A673 (cell line): ENCODE measurements at regions of chr7 and their contacts with region 1.

Region 1: GRCh38 chr7:112058686-112059085 is 147.5 kb downstream of the DOCK4 start:
- DNase-seq: no peak
- H3K4me3 ChIP-seq: no peak overlapping the region
- H3K27ac ChIP-seq: no peak overlapping the region
- H3K4me1 ChIP-seq: peaks cover 4% of the 10 kb centered on the region
- H3K27me3 ChIP-seq: no peaks in the 10 kb centered on the region
- CTCF ChIP-seq: no peak

Region 2: GRCh38 chr7:112036071-112036470 is 22.6 kb before region 1 on chr7:
- CTCF ChIA-PET with region 1: no interaction called
- POLR2A ChIA-PET with region 1: interaction called, 18 read pairs
- intact Hi-C with region 1: no loop called
- DNase-seq: no peak
- H3K4me3 ChIP-seq: no peak overlapping the region
- H3K27ac ChIP-seq: no peak overlapping the region
- H3K4me1 ChIP-seq: peaks cover 5% of the 10 kb centered on the region
- H3K27me3 ChIP-seq: no peaks in the 10 kb centered on the region
- CTCF ChIP-seq: no peak

Region 3: DNA sequence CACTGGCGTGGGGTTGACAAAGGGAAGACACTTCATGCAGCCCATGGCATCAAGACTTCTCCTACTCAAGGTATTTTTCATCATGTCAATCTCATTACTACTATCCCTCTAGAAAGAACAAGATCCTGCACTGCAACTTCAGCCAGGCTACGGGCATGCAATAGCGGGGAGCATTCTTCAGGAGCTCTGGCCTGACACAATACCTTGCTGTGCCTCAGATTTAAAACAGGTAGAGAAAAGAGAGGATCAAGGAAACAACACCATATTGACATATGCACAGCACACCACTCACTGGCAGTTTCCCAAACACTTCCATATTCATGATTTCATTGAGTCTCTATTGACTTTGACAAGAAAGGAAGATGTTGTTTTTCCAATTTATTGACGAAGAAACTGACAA is 96.0 kb after region 1 on chr7:
- CTCF ChIA-PET with region 1: no interaction called
- POLR2A ChIA-PET with region 1: no interaction called
- intact Hi-C with region 1: no loop called
- DNase-seq: no peak
- H3K4me3 ChIP-seq: no peak overlapping the region
- H3K27ac ChIP-seq: no peak overlapping the region
- H3K4me1 ChIP-seq: peaks cover 7% of the 10 kb centered on the region
- H3K27me3 ChIP-seq: no peaks in the 10 kb centered on the region
- CTCF ChIP-seq: no peak